ENCODE measurements at regions of chr12 and their contacts with region 1.

Region 1: GRCh38 chr12:76422543-76423438 is 74.6 kb upstream of the BBS10 start:
- DNase-seq: no peak
- H3K4me3 Mint-ChIP-seq: peak overlapping the region; percentile 71
- H3K27ac Mint-ChIP-seq: peak overlapping the region; percentile 88
- H3K4me1 Mint-ChIP-seq: peaks cover 26% of the 10 kb centered on the region
- H3K27me3 Mint-ChIP-seq: no peaks in the 10 kb centered on the region
- CTCF ChIP-seq: no peak

Region 2: DNA sequence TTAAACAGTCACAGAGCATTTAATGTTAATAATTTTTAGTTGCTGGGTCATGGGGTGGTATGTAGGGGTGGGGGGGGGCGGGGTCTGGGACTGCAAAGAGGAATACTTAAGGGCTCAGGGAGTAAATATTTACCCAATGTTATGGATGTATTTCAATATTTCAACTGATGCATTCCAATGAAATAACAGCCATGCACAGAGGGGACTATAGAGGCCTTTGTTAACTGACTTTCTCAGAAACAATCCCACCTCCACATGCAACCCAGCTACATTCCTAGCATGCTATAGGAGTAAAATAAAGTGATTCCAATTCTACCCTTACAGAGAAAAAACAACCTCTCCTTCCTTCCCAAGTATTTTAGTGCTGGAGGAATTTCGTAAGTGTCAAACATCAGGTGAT is 66.7 kb before region 1 on chr12:
- CTCF ChIA-PET with region 1: interaction called, 3 read pairs
- intact Hi-C with region 1: loop called (anchors 1 kb)
- DNase-seq: peak; percentile 47
- H3K4me3 Mint-ChIP-seq: peak overlapping the region; percentile 33
- H3K27ac Mint-ChIP-seq: peak overlapping the region; percentile 48
- H3K4me1 Mint-ChIP-seq: peaks cover 27% of the 10 kb centered on the region
- H3K27me3 Mint-ChIP-seq: no peaks in the 10 kb centered on the region
- CTCF ChIP-seq: no peak

Region 3: DNA sequence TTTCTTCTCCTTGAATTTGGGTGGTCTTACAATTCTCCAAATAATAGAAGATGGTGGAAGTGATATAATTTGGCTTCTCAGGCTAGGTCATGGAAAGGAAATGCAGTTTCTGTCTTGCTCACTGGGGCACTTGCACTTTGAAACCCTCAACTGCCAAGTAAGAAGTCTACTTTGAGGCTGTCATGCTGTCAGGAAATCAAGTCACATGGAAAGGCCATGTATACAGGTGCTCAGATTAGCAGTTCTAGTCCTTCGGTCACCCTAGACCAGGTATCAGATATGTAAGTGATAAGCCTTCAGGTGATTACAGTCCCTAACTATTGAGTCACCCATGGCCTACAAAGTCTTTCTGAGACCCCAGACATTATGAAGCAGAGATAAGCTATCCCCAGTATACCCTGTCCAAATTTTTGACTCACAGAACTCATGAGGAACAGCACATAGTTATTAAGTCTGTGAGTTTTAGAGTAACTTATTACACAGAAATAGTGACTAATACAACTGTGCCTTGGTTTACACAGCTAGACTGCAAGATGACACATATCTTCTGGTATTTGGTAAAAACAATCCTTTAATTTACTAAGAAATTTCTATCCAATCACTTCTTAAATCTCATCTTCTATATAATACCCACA is 48.3 kb before region 1 on chr12:
- CTCF ChIA-PET with region 1: no interaction called
- intact Hi-C with region 1: loop called (anchors 5 kb)
- DNase-seq: peak; percentile 9
- H3K4me3 Mint-ChIP-seq: no peak overlapping the region
- H3K27ac Mint-ChIP-seq: peak overlapping the region; percentile 64
- H3K4me1 Mint-ChIP-seq: peaks cover 25% of the 10 kb centered on the region
- H3K27me3 Mint-ChIP-seq: no peaks in the 10 kb centered on the region
- CTCF ChIP-seq: no peak

Region 4: DNA sequence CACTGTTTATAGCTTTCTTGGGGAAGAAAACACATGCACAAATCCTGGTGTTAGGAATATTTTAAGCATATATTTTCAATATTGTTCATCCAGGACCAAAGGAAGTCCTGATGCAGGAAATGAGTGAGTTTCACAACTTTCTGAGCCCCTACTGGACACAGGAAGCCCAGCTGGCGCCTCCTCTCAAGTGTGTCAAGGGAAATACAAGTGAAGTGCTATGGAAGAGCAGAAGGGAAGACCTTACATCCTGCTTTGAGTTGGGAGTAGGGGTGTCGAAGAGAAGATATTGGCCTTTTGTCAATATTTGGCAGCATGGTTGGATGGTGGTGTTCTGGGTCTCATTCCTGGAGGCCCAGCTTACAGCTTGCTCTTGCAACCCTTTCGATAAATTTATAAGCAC is 275.1 kb after region 1 on chr12:
- CTCF ChIA-PET with region 1: no interaction called
- intact Hi-C with region 1: no loop called
- DNase-seq: no peak
- H3K4me3 Mint-ChIP-seq: no peak overlapping the region
- H3K27ac Mint-ChIP-seq: no peak overlapping the region
- H3K4me1 Mint-ChIP-seq: no peaks in the 10 kb centered on the region
- H3K27me3 Mint-ChIP-seq: no peaks in the 10 kb centered on the region
- CTCF ChIP-seq: no peak